Activated naive CD4-positive, alpha-beta T cell treated with anti-CD3 and anti-CD28 coated beads for 36 hours (primary cell): ENCODE measurements at regions of chr20 and their contacts with region 1.

Region 1: DNA sequence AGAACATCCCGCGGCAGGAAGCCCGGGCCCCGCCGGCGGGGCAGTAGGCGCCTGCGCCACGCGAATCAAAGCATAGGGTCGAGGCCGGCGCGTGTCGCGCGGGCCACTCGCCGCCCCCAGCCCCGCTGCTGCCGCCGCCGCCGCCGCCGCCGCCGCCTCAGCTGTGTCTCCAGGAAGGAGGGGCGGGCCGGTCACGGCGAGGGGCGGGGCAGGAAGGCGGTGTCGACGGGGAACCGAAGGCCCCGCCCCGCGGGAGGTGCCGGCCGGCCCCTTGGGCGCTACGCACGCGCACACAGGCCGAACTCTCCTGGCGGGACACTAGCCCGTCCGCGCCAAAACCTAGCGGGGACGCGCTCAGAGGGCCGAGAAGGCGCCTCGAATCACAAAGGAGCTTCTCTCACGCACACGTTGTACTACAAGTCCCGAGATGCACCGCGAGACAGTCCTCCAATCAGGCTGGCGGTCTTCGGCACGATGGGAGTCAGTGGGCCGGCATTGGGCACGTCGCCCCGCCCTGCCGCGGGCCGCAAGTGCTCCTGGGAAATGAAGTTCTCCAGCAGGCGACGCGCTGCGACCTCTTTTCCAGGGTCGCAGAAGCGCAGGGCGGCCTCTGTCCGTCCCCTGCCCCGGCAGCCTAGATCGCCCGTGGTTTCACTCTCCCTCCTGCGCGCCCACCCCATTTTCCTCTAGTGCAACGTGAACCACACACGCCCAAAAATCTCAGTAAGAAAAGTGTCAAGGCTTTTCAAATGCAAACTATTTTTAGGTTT is at the start of gene RALGAPA2:
- DNase-seq: peak; percentile 96
- H3K4me3 Mint-ChIP-seq: peak within 1 kb of the TSS; percentile 87
- H3K27ac Mint-ChIP-seq: peak within 1 kb of the TSS; percentile 86
- H3K4me1 Mint-ChIP-seq: peaks cover 34% of the 10 kb centered on the region
- H3K27me3 Mint-ChIP-seq: no peaks in the 10 kb centered on the region
- total RNA-seq, gene RALGAPA2: 13.6 to 13.7 TPM

Region 2: GRCh38 chr20:19737025-19737424 is 975.6 kb before region 1 on chr20:
- CTCF ChIA-PET with region 1: no interaction called
- intact Hi-C with region 1: loop called (anchors 2 kb)
- DNase-seq: peak; percentile 42
- H3K4me3 Mint-ChIP-seq: no peak overlapping the region
- H3K27ac Mint-ChIP-seq: no peak overlapping the region
- H3K4me1 Mint-ChIP-seq: peaks cover 16% of the 10 kb centered on the region
- H3K27me3 Mint-ChIP-seq: peaks cover 21% of the 10 kb centered on the region

Region 3: DNA sequence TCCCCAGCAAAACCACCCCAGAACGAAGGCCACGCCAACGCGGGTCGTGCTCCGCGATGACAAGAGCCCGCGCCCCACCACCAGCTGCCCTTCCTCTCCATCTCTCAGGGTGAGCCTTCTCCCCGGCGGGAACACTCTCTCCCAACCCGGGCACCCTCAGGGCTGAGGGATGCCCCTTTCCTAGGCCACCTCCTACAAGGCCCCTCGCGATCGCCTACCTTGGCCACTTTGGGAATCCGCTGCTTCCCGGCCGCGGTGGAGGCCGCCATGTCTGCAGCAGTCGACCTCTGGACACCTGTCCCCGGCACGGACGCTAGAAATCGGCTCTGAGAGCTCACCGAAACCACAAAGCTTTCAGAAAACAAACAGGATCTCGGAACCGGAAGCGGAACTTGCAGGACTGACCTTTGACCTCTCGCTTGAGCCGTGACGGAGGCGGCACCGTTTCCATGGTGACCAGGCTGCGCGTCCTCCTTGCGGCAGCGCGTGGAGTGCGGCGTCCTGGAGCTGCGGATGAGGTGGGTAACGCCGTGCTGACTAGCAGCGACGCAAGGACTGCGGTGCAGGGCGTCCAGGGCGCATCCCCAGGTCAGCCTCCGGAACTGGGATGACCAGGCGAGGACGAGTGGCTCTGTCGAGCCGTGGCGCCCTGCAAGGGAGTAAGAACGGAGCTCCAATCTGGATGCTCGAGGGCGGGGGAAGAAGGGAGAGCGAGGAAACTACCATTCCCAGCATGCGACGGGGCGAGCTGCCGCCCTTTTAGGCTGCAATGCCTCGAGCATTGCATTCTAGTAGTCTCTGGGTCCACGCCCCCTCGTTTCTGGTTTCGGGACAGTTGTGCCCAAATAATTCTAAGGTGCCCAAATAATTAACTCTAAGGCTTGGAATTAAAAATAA is 660.3 kb before region 1 on chr20 and contains the starts of genes CFAP61 and CRNKL1:
- CTCF ChIA-PET with region 1: no interaction called
- intact Hi-C with region 1: loop called (anchors 1 kb)
- DNase-seq: peak; percentile 97
- H3K4me3 Mint-ChIP-seq: peak within 1 kb of the TSS; percentile 97
- H3K27ac Mint-ChIP-seq: peak within 1 kb of the TSS; percentile 96
- H3K4me1 Mint-ChIP-seq: peaks cover 14% of the 10 kb centered on the region
- H3K27me3 Mint-ChIP-seq: peaks cover 5% of the 10 kb centered on the region
- total RNA-seq, gene CFAP61: not detected
- total RNA-seq, gene CRNKL1: 14.1 to 15.7 TPM

Region 4: GRCh38 chr20:20489054-20489453 is 223.6 kb before region 1 on chr20:
- CTCF ChIA-PET with region 1: no interaction called
- intact Hi-C with region 1: loop called (anchors 5 kb)
- DNase-seq: no peak
- H3K4me3 Mint-ChIP-seq: peak overlapping the region; percentile 48
- H3K27ac Mint-ChIP-seq: peak overlapping the region; percentile 89
- H3K4me1 Mint-ChIP-seq: peaks cover 50% of the 10 kb centered on the region
- H3K27me3 Mint-ChIP-seq: no peaks in the 10 kb centered on the region

Region 5: DNA sequence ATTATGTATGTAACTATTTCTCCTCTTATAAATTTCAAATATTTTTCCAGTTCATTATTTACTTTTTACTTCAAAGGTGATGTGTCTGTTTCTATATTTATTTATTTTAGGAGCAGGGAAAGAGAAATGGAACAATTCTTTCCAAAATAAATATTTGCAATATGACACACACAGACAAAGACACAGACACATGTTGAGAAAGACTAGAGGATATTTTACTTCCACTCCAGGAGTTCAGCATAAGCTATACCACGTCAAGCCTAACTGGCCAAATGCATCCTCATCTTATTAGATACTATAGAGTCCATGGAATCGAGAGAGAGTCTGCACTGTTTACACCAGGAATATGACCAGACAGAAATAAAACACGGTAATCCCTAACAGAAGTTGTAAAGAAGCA is 13.5 kb before region 1 on chr20:
- CTCF ChIA-PET with region 1: no interaction called
- intact Hi-C with region 1: no loop called
- DNase-seq: no peak
- H3K4me3 Mint-ChIP-seq: no peak overlapping the region
- H3K27ac Mint-ChIP-seq: no peak overlapping the region
- H3K4me1 Mint-ChIP-seq: peaks cover 28% of the 10 kb centered on the region
- H3K27me3 Mint-ChIP-seq: no peaks in the 10 kb centered on the region

Region 6: GRCh38 chr20:20734475-20734948 is 21.9 kb after region 1 on chr20:
- CTCF ChIA-PET with region 1: interaction called, 3 read pairs
- intact Hi-C with region 1: loop called (anchors 1 kb)
- DNase-seq: peak; percentile 70
- H3K4me3 Mint-ChIP-seq: no peak overlapping the region
- H3K27ac Mint-ChIP-seq: peak overlapping the region; percentile 63
- H3K4me1 Mint-ChIP-seq: peaks cover 23% of the 10 kb centered on the region
- H3K27me3 Mint-ChIP-seq: no peaks in the 10 kb centered on the region

Region 7: DNA sequence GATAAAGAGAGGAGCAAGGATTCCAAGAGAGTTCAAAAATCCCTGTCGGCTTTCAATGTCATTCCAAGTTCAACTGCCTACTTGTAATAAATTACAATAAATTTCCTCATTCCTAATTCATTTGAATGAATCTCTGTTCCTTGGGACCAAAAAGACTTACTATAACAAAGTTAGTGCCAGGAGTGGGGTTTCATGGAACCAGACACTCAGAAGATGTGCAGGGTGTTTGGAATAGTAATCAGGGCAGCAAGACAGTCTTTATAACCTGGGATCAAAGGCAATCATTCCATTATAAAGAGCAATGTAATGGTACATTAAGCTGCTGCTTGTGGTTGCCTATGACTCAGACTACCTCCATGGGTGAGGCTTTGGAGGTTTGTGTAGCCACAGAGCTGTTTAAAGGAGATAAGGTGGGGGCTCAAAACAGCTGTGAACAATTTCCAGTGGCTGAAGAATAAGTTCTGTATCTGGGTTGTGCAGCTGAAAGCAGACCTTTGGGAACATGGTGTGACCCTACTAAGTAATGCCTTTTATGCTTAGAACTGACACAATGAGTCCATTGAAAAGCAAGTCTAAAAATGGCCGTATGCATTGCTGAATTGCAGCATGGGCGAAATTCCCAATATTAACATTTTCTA is 233.6 kb after region 1 on chr20:
- CTCF ChIA-PET with region 1: no interaction called
- intact Hi-C with region 1: no loop called
- DNase-seq: no peak
- H3K4me3 Mint-ChIP-seq: no peak overlapping the region
- H3K27ac Mint-ChIP-seq: no peak overlapping the region
- H3K4me1 Mint-ChIP-seq: no peaks in the 10 kb centered on the region
- H3K27me3 Mint-ChIP-seq: peaks cover 7% of the 10 kb centered on the region

Region 8: GRCh38 chr20:21004386-21005076 is 291.9 kb after region 1 on chr20:
- CTCF ChIA-PET with region 1: no interaction called
- intact Hi-C with region 1: no loop called
- DNase-seq: no peak
- H3K4me3 Mint-ChIP-seq: no peak overlapping the region
- H3K27ac Mint-ChIP-seq: no peak overlapping the region
- H3K4me1 Mint-ChIP-seq: no peaks in the 10 kb centered on the region
- H3K27me3 Mint-ChIP-seq: peaks cover 9% of the 10 kb centered on the region

Region 9: GRCh38 chr20:21125849-21126580 is 413.4 kb after region 1 on chr20 and contains the start of gene KIZ:
- CTCF ChIA-PET with region 1: no interaction called
- intact Hi-C with region 1: loop called (anchors 1 kb)
- DNase-seq: peak; percentile 97
- H3K4me3 Mint-ChIP-seq: peak within 1 kb of the TSS; percentile 86
- H3K27ac Mint-ChIP-seq: peak within 1 kb of the TSS; percentile 73
- H3K4me1 Mint-ChIP-seq: peaks cover 14% of the 10 kb centered on the region
- H3K27me3 Mint-ChIP-seq: no peaks in the 10 kb centered on the region
- total RNA-seq, gene KIZ: 11.3 to 13.0 TPM

Region 10: GRCh38 chr20:21548390-21549035 is 835.9 kb after region 1 on chr20:
- CTCF ChIA-PET with region 1: no interaction called
- intact Hi-C with region 1: loop called (anchors 5 kb)
- DNase-seq: peak; percentile 80
- H3K4me3 Mint-ChIP-seq: peak overlapping the region; percentile 36
- H3K27ac Mint-ChIP-seq: peak overlapping the region; percentile 76
- H3K4me1 Mint-ChIP-seq: peaks cover 42% of the 10 kb centered on the region
- H3K27me3 Mint-ChIP-seq: no peaks in the 10 kb centered on the region